ENCODE measurements at regions of chr18 and their contacts with region 1.

Region 1: GRCh38 chr18:31990823-31991222 is 27.8 kb upstream of the RNF125 start:
- DNase-seq: peak; percentile 41
- CTCF ChIP-seq: no peak

Region 2: GRCh38 chr18:31977270-31977872 is 13.5 kb before region 1 on chr18:
- CTCF ChIA-PET with region 1: interaction called, 19 read pairs
- POLR2A ChIA-PET with region 1: no interaction called
- DNase-seq: peak; percentile 24
- CTCF ChIP-seq: peak; percentile 36

Measured in GM10248 (cell line).